Activated CD8-positive, alpha-beta T cell treated with anti-CD3 and anti-CD28 coated beads for 36 hours (primary cell): ENCODE measurements at regions of chr9 and their contacts with region 1.

Region 1: GRCh38 chr9:70639853-70640814 is 225.7 kb upstream of the KLF9 start:
- DNase-seq: no peak
- ATAC-seq: no peak
- H3K4me3 Mint-ChIP-seq: no peak overlapping the region
- H3K27ac Mint-ChIP-seq: no peak overlapping the region
- H3K4me1 Mint-ChIP-seq: no peaks in the 10 kb centered on the region
- H3K27me3 Mint-ChIP-seq: peaks cover 8% of the 10 kb centered on the region
- CTCF ChIP-seq: peak; percentile 57

Region 2: GRCh38 chr9:71001780-71002386 is 361.7 kb after region 1 on chr9:
- CTCF ChIA-PET with region 1: interaction called, 7 read pairs
- POLR2A ChIA-PET with region 1: no interaction called
- intact Hi-C with region 1: loop called (anchors 10 kb)
- DNase-seq: peak; percentile 15
- ATAC-seq: no peak
- H3K4me3 Mint-ChIP-seq: no peak overlapping the region
- H3K27ac Mint-ChIP-seq: no peak overlapping the region
- H3K4me1 Mint-ChIP-seq: no peaks in the 10 kb centered on the region
- H3K27me3 Mint-ChIP-seq: no peaks in the 10 kb centered on the region
- CTCF ChIP-seq: no peak

Region 3: DNA sequence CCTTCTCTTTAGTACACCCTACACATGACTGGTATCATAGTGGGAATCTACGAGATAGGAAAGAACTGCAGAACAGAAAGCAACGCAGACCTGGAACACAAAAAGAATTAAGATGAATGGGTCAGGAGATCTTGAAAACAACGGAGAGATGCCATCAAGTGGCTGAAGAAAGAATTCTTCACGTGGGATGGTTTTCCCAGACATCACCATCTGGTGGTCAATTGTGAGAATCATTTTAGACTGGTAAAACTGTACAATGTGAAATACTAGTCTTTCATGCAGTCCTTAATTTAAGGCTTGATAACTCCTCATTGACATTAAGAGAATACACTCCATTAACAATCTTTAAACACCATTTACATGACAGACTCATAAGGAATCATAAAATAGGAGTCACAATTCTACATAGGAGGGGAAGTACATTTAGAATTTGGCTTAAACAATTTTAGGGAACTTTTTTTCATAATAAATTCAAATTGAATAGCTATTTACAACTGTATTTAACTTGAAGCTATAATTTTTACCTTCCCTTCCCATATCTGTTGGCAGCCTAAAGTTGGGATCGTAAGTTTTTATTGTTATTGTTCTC is 609.7 kb after region 1 on chr9:
- CTCF ChIA-PET with region 1: interaction called, 15 read pairs
- POLR2A ChIA-PET with region 1: no interaction called
- intact Hi-C with region 1: no loop called
- DNase-seq: no peak
- ATAC-seq: no peak
- H3K4me3 Mint-ChIP-seq: no peak overlapping the region
- H3K27ac Mint-ChIP-seq: no peak overlapping the region
- H3K4me1 Mint-ChIP-seq: no peaks in the 10 kb centered on the region
- H3K27me3 Mint-ChIP-seq: peaks cover 6% of the 10 kb centered on the region
- CTCF ChIP-seq: peak; percentile 62